AG04450 (cell line): ENCODE measurements at regions of chr2 and their contacts with region 1.

Region 1: DNA sequence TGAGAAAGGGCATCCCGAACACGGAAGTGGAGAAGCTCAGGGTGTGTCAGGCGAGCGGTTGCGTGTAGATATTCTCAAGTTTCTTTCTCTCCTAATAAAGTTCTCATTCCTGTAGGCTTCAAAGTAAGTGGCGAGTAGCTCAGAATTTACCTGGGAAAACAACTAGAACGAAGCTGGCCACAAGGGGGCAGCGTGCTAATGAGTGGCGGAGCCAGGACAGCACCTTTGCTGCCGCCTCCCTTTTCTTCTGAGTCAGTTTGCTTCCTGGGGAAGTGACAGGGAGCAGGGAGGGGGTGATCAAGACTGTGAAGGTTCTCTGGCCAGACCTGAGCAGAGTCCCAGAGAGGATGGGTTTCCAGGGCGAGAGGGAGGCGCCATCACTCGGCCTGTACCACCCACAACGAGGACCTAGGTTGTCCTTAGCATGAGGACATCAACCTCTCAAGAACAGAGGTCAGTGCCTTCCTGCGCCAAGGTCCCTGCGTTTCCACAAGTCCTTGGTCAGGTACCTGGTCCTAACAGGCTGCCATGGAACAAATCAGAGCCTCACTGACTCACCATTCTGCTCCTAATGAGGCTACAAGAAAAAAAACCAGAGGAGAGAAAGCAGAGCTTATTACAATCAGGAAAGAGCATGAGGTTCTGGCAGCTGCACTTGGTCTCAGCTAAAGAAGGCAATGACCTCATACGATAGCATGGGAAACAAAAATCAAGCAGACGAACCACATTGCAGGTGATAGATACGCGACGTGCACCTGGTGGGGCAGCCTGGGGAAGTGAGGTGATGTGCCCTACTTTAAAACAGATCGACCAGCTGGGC is 98.6 kb downstream of the PLB1 start:
- DNase-seq: peak; percentile 53
- H3K4me3 ChIP-seq: no peak overlapping the region
- H3K27ac ChIP-seq: peak overlapping the region; percentile 61
- H3K27me3 ChIP-seq: no peaks in the 10 kb centered on the region
- CTCF ChIP-seq: peak; percentile 80

Region 2: GRCh38 chr2:28583899-28584553 is 10.5 kb before region 1 on chr2:
- CTCF ChIA-PET with region 1: interaction called, 33 read pairs
- POLR2A ChIA-PET with region 1: interaction called, 4 read pairs
- DNase-seq: peak; percentile 75
- H3K4me3 ChIP-seq: peak overlapping the region; percentile 43
- H3K27ac ChIP-seq: peak overlapping the region; percentile 96
- H3K27me3 ChIP-seq: no peaks in the 10 kb centered on the region
- CTCF ChIP-seq: no peak

Region 3: DNA sequence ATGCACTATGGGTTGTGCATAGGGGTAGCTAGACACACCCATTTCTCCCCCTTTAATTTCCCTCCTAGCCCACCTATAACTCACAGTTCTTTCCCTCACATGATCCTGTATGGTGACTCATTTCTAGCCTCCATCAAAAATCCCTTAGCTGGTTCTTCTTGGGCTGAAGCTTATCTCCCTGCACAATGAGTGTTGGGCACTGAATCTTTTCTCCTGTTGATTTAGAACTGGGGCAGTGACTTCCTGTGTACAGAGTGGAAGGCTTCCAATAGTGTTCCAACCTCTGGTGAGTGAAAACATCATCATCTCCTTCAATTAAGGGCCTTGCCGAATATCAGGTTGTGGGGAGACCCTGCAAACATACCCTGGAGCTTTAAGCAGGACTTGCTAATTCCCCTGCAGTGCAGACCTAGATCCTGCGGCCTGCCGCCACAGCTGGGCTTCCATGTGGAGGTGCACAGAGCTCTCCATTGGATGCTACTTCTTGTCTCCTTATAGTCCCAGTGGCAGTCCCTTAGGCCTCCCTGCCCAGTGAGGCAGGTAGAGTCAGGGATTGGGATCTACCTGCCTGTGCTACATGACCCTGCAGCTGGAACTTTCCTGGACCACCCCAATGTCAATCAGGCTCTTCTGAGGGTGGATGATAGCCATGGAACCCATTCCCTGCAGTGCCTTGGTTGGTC is 23.1 kb after region 1 on chr2:
- CTCF ChIA-PET with region 1: interaction called, 28 read pairs
- POLR2A ChIA-PET with region 1: interaction called, 3 read pairs
- DNase-seq: no peak
- H3K4me3 ChIP-seq: no peak overlapping the region
- H3K27ac ChIP-seq: no peak overlapping the region
- H3K27me3 ChIP-seq: no peaks in the 10 kb centered on the region
- CTCF ChIP-seq: no peak

Region 4: GRCh38 chr2:28695245-28695647 is 100.7 kb after region 1 on chr2:
- CTCF ChIA-PET with region 1: interaction called, 10 read pairs
- POLR2A ChIA-PET with region 1: no interaction called
- DNase-seq: no peak
- H3K4me3 ChIP-seq: no peak overlapping the region
- H3K27ac ChIP-seq: no peak overlapping the region
- H3K27me3 ChIP-seq: no peaks in the 10 kb centered on the region
- CTCF ChIP-seq: no peak

Region 5: GRCh38 chr2:28764909-28765711 is 170.6 kb after region 1 on chr2:
- CTCF ChIA-PET with region 1: interaction called, 17 read pairs
- POLR2A ChIA-PET with region 1: no interaction called
- DNase-seq: no peak
- H3K4me3 ChIP-seq: no peak overlapping the region
- H3K27ac ChIP-seq: no peak overlapping the region
- H3K27me3 ChIP-seq: no peaks in the 10 kb centered on the region
- CTCF ChIP-seq: no peak

Region 6: GRCh38 chr2:28810384-28811285 is 216.1 kb after region 1 on chr2 and contains the start of gene SPDYA:
- CTCF ChIA-PET with region 1: interaction called, 10 read pairs
- POLR2A ChIA-PET with region 1: no interaction called
- DNase-seq: no peak
- H3K4me3 ChIP-seq: peak within 1 kb of the TSS; percentile 58
- H3K27ac ChIP-seq: no peak within 1 kb of the TSS
- H3K27me3 ChIP-seq: no peaks in the 10 kb centered on the region
- CTCF ChIP-seq: no peak
- polyA plus RNA-seq, gene SPDYA: 0.07 and 0.22 TPM in 2 replicates